ENCODE measurements at regions of chr10 and their contacts with region 1.

Region 1: GRCh38 chr10:101018600-101019439 is 12.1 kb downstream of the PDZD7 start:
- DNase-seq: peak; percentile 72
- ATAC-seq: peak; percentile 91
- H3K4me3 ChIP-seq: peak overlapping the region; percentile 13 to 38; a peak in 3 of 4 replicates
- H3K27ac ChIP-seq: no peak overlapping the region
- H3K4me1 ChIP-seq: peaks cover 7 to 30% of the 10 kb centered on the region in 2 experiments; a peak in 3 of 4 replicates
- H3K27me3 ChIP-seq: no peaks in the 10 kb centered on the region
- CTCF ChIP-seq: peak in 2 of 3 experiments; percentile 92 to 94; a peak in 4 of 6 replicates
- POLR2A ChIP-seq: no peak
- RAD21 ChIP-seq: no peak

Region 2: GRCh38 chr10:100998991-100999741 is 19.7 kb before region 1 on chr10:
- CTCF ChIA-PET with region 1: interaction called, 98 read pairs
- POLR2A ChIA-PET with region 1: interaction called, 9 read pairs
- RAD21 ChIA-PET with region 1: interaction called, 4 to 10 read pairs
- intact Hi-C with region 1: no loop called
- DNase-seq: no peak
- ATAC-seq: peak; percentile 51
- H3K4me3 ChIP-seq: peak overlapping the region; percentile 88 to 92
- H3K27ac ChIP-seq: peak overlapping the region; percentile 87
- H3K4me1 ChIP-seq: peaks cover 21 to 55% of the 10 kb centered on the region in 2 experiments
- H3K27me3 ChIP-seq: no peaks in the 10 kb centered on the region
- CTCF ChIP-seq: peak in 2 of 3 experiments; percentile 93 to 96; a peak in 4 of 6 replicates
- POLR2A ChIP-seq: no peak
- RAD21 ChIP-seq: no peak

Region 3: GRCh38 chr10:101031128-101031795 is 12.4 kb after region 1 on chr10 and contains the starts of genes PDZD7 and SFXN3:
- CTCF ChIA-PET with region 1: interaction called, 51 read pairs
- POLR2A ChIA-PET with region 1: interaction called, 5 read pairs
- RAD21 ChIA-PET with region 1: interaction called in 1 of 2 experiments, 5 read pairs
- intact Hi-C with region 1: no loop called
- DNase-seq: peak; percentile 94
- ATAC-seq: peak; percentile 87
- H3K4me3 ChIP-seq: peak within 1 kb of the TSS; percentile 67 to 87
- H3K27ac ChIP-seq: peak within 1 kb of the TSS; percentile 81
- H3K4me1 ChIP-seq: peaks cover 32 to 56% of the 10 kb centered on the region in 2 experiments
- H3K27me3 ChIP-seq: no peaks in the 10 kb centered on the region
- CTCF ChIP-seq: no peak
- POLR2A ChIP-seq: no peak
- RAD21 ChIP-seq: no peak
- total RNA-seq, gene PDZD7: 6.1 TPM
- total RNA-seq, gene SFXN3: 52.5 TPM

Region 4: DNA sequence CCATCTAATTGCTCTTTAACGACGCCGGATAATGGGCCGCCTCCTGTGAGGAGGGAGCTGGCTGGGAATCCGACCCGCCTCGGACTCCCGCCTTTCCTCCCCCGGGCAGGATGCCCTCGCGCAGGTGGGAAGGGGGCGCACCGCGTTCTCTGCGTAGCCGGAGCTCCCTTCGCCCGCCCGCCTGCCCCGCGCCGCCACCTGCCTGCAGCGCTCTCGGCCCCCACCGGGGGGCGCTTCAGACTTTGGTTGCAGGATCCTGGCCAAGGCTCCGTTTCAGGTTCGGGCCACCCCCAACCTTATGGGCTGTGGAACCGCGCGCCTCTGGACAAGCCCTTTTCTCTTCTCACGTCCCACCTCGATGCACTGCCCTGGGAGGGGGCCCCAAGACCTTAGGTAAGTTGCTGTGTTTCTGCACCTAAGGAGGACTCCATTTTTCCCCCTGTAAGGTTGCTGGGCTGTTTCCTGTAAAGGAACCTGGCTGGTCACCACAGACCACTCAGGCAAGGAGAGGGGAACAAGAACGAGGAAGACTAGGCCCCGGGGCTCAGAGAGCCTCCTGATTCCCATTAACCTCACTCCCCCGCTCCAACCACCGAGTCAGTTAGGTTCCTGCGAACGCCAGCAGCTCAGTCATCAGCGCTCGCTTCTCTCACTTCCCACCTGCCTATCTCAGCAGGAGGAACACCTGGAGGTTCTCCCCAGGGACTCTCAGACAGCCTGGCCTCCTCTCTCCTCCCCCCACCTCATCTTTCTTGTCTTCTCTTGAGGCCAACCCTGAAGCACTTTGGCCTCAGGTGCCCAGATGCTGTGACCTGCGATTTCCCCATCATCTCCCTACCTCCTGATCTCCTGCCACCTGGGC is 31.6 kb after region 1 on chr10:
- CTCF ChIA-PET with region 1: interaction called, 16 read pairs
- POLR2A ChIA-PET with region 1: no interaction called
- RAD21 ChIA-PET with region 1: interaction called in 1 of 2 experiments, 6 read pairs
- intact Hi-C with region 1: no loop called
- DNase-seq: no peak
- ATAC-seq: peak; percentile 90
- H3K4me3 ChIP-seq: peak overlapping the region in 1 of 2 experiments; percentile 38; a peak in 3 of 4 replicates
- H3K27ac ChIP-seq: no peak overlapping the region; the same call in 1 of the 2 replicates
- H3K4me1 ChIP-seq: peaks cover 18 to 36% of the 10 kb centered on the region in 2 experiments
- H3K27me3 ChIP-seq: no peaks in the 10 kb centered on the region
- CTCF ChIP-seq: peak in 2 of 3 experiments; percentile 98; a peak in 4 of 6 replicates
- POLR2A ChIP-seq: no peak
- RAD21 ChIP-seq: no peak

Region 5: GRCh38 chr10:101067356-101068083 is 48.7 kb after region 1 on chr10:
- CTCF ChIA-PET with region 1: interaction called, 30 read pairs
- POLR2A ChIA-PET with region 1: interaction called, 3 read pairs
- RAD21 ChIA-PET with region 1: interaction called, 6 read pairs
- intact Hi-C with region 1: loop called (anchors 2 kb)
- DNase-seq: peak; percentile 91
- ATAC-seq: peak; percentile 39
- H3K4me3 ChIP-seq: peak overlapping the region; percentile 66 to 71
- H3K27ac ChIP-seq: peak overlapping the region; percentile 93
- H3K4me1 ChIP-seq: peaks cover 37 to 79% of the 10 kb centered on the region in 2 experiments
- H3K27me3 ChIP-seq: no peaks in the 10 kb centered on the region
- CTCF ChIP-seq: peak in 2 of 3 experiments; percentile 89 to 94; a peak in 4 of 6 replicates
- POLR2A ChIP-seq: no peak
- RAD21 ChIP-seq: no peak

Region 6: DNA sequence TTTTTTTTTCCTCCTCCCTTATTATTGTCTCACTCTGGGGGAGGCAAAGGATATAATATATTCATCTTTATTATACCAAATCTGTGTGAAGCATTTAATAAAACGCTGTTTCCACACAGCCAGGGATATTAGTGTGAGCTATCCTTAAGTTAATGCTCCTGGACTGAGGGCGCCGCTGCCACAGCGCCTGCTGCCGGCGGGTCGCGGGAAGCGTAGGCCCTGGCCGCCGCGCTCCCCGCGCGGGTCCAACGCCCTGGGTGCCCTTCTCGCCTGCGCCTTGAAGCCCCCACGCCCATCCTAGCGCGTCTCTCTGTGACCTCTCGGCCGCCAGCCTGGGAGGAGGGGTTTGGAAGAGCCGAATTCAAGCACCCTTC is 219.9 kb after region 1 on chr10:
- CTCF ChIA-PET with region 1: no interaction called
- POLR2A ChIA-PET with region 1: no interaction called
- RAD21 ChIA-PET with region 1: no interaction called
- intact Hi-C with region 1: no loop called
- DNase-seq: peak; percentile 18
- ATAC-seq: peak; percentile 96
- H3K4me3 ChIP-seq: peak overlapping the region; percentile 26 to 29; a peak in 3 of 4 replicates
- H3K27ac ChIP-seq: no peak overlapping the region
- H3K4me1 ChIP-seq: peaks cover 3 to 13% of the 10 kb centered on the region in 2 experiments; a peak in 3 of 4 replicates
- H3K27me3 ChIP-seq: no peaks in the 10 kb centered on the region
- CTCF ChIP-seq: peak; percentile 75 to 100 (median 100)
- POLR2A ChIP-seq: no peak
- RAD21 ChIP-seq: no peak

Region 7: GRCh38 chr10:102782673-102783551 is 1764.1 kb after region 1 on chr10:
- CTCF ChIA-PET with region 1: no interaction called
- POLR2A ChIA-PET with region 1: no interaction called
- RAD21 ChIA-PET with region 1: no interaction called
- intact Hi-C with region 1: no loop called
- DNase-seq: no peak
- ATAC-seq: no peak
- H3K4me3 ChIP-seq: no peak overlapping the region
- H3K27ac ChIP-seq: no peak overlapping the region
- H3K4me1 ChIP-seq: no peaks in the 10 kb centered on the region; a peak in 1 of 4 replicates
- H3K27me3 ChIP-seq: no peaks in the 10 kb centered on the region
- CTCF ChIP-seq: no peak
- POLR2A ChIP-seq: no peak
- RAD21 ChIP-seq: no peak